GM10248 (cell line): ENCODE measurements at regions of chr10 and their contacts with region 1.

Region 1: DNA sequence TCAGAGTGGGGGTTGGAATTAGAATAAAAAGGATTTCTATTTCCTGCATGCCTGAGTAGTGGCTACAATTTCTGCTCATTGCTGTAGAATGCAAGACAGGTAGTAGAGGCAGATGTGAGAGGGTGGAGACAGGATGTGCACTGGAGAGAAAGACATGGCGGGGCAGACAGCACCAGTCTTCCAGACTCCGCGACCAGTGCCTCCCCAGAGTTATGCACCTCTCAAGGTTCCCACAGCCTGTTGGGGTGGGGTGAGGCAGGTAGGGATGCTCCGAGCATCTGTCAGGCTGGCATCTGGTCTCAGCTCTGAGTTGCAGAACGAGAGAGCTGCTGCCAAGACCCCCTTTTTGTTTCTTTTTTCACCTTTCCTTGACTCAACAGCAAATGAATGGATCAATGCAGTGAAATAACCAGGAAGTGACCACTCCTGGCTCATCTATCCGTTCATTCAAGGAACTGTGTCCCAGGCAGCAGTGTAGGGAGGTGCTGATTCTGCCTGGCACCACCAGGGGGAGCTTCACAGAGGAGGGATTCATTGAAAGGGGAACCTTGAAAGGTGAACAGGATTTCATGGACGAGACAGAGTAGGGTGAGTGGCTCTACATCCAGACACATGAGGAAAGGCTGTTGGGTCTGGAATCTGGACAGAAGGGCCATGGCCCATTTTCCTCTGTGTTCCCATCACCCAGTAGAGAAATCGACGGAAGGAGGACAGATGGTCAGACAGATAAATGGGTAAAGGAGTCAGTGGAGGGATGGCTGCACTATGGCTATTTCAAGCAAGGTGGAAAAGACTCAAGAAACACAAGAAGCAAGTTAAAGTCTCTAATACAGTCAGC is 17.2 kb upstream of the SLC18A3 start:
- DNase-seq: peak; percentile 80
- CTCF ChIP-seq: peak; percentile 94

Region 2: DNA sequence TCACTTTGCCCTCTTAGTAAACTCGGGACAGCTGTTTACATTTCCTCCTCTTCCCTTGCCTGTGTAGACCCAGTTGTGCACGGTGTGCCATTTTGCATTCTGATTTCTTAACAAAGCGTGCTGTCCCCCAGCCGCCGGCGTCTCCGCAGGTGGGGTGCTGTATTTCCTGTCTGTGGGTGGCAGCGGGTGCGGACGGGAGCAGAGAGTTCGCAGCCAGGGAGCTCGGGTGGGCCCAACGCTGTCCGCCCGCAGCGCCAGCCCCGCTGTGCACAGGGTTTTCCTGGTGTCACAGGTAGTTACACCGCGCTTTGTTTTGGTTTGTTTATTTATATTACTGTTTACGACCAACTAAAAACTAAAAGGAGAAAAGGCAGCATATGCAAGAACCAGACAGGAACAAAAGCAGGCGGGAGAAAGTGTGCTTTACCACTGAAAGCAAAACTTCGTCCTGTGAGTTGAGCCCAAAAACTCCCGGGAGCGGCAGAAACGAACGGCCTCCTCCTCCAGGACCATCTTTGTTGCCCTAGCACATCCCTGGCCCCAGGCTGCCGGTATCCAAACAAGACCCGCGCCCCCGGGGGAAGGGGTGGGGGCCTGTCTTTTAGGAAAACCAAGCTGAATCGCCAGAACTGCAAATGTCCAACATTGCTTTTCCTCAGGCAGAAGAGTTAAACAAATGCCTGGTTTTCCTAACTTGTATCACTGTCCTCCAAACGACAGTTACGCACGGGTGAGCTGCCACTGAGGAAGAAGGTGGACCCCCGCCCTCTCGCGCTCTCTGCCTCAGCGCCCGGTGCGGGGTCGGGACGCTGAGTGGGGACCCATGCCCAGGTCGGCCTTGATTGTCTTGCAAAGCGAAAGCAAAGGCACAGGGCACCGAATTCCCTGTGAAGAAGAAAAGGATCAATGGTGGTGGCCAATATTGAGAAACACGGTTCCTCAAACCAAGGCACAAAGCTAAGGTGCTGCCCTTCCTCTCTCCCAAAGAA is 151.2 kb before region 1 on chr10:
- CTCF ChIA-PET with region 1: no interaction called
- POLR2A ChIA-PET with region 1: no interaction called
- DNase-seq: no peak
- CTCF ChIP-seq: no peak

Region 3: GRCh38 chr10:49538381-49539319 is 54.3 kb before region 1 on chr10 and contains the start of gene ERCC6:
- CTCF ChIA-PET with region 1: interaction called, 12 read pairs
- POLR2A ChIA-PET with region 1: no interaction called
- DNase-seq: peak; percentile 98
- CTCF ChIP-seq: peak; percentile 5

Region 4: DNA sequence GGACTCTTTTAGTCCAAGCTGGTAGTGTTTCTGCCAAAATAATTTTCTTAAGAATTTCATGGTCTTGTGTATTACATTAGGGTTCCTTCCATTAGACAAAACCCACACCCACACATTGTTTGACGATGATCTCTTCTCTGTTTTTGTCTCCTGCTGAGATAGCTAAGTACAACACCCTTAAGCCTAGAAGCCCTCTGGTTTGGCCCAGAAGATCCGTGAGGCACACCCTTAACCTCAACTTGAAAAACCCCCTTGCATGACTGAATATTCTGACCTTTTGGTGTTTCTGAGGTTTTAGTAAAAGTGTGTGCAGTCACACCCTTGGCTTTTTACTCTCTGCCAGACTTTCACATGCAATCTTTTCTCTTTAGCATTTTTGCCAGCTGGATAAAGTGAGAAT is 24.7 kb before region 1 on chr10:
- CTCF ChIA-PET with region 1: interaction called, 32 read pairs
- POLR2A ChIA-PET with region 1: no interaction called
- DNase-seq: no peak
- CTCF ChIP-seq: no peak

Region 5: DNA sequence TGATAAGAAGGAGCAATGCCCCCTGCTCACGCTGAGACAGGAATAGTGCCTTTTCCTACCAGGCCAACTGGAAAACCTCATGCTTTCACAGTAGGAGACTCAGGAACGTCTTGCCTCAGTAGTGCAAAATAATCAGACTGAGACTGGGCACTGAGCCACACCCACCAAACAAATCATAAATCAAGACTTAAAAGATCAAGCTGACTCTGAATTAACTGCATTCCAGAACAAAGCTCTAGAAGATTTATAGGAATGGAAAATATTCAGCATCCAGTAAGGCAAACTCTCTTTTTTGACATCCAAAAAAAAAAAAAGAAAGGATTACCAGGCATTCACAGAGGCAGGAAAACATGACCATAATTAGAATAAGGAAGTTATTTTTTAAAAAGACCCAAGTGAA is 13.3 kb before region 1 on chr10:
- CTCF ChIA-PET with region 1: interaction called, 13 read pairs
- POLR2A ChIA-PET with region 1: no interaction called
- DNase-seq: no peak
- CTCF ChIP-seq: no peak

Region 6: DNA sequence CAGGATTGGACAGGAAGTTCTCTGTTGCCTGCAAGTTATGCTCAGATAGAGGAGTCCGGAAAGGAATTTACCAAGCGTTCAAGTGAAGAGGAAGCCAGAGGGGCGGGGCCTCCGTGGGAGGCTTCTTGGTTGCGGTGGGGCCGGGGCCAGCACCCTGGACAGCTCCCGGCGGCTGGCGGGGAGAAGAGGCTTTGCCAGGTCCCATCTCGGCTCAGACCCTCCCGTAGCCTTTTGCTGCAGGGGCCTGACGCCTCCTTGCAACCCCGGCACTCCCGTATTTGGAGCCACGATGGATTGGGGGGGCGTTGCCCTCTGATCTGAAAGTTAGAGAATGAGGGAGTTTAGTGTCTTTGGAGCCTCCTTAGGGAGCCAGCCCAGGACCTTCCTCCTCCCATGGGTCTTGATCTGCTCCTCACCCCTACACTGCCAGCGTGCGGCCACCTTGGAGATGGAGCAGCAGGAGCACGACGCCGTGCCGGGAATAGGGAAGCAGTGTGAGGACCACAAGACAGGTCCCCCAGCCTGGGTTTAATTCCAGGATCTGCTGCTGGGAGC is 14.1 kb after region 1 on chr10:
- CTCF ChIA-PET with region 1: interaction called, 25 read pairs
- POLR2A ChIA-PET with region 1: no interaction called
- DNase-seq: peak; percentile 87
- CTCF ChIP-seq: no peak

Region 7: GRCh38 chr10:49655099-49655498 is 62.2 kb after region 1 on chr10:
- CTCF ChIA-PET with region 1: no interaction called
- POLR2A ChIA-PET with region 1: no interaction called
- DNase-seq: no peak
- CTCF ChIP-seq: no peak

Region 8: GRCh38 chr10:50224330-50224952 is 631.5 kb after region 1 on chr10:
- CTCF ChIA-PET with region 1: interaction called, 24 read pairs
- POLR2A ChIA-PET with region 1: no interaction called
- DNase-seq: peak; percentile 43
- CTCF ChIP-seq: peak; percentile 72